ENCODE measurements at regions of chr10 and their contacts with region 1.

Region 1: DNA sequence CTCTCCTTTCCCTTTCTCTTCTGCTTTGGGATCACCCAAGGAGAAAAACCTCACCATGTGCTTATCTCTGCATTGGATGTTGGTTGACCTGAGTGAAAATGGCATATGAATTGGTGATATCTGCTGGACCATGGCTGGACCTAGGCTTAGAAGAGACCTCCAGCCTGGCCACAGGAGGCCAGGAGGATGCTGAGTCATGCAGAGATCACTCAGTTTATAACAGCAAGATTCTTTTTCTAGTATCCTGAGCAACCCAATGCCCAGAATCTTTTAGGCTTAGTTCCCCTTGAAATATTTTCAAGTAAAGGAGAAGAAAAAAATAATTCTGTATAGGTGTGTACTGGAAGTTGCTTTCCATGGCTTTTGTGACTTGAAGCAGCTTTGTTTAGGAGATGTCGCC is 236.3 kb downstream of the KLF6 start:
- DNase-seq: no peak
- H3K4me3 ChIP-seq: no peak overlapping the region
- H3K27ac ChIP-seq: peak overlapping the region; percentile 0 to 35
- H3K4me1 ChIP-seq: peaks cover 0 to 17% (median 5%) of the 10 kb centered on the region in 4 donors
- H3K27me3 ChIP-seq: no peaks in the 10 kb centered on the region
- CTCF ChIP-seq: no peak

Region 2: GRCh38 chr10:3467052-3467951 is 81.4 kb before region 1 on chr10:
- intact Hi-C with region 1: loop called (anchors 5 kb)
- DNase-seq: peak; percentile 85 to 89
- H3K4me3 ChIP-seq: peak overlapping the region; percentile 26 to 31
- H3K27ac ChIP-seq: peak overlapping the region; percentile 81 to 82
- H3K4me1 ChIP-seq: peaks cover 4 to 69% (median 37%) of the 10 kb centered on the region in 4 donors
- H3K27me3 ChIP-seq: no peaks in the 10 kb centered on the region
- CTCF ChIP-seq: peak; percentile 28 to 42

Region 3: DNA sequence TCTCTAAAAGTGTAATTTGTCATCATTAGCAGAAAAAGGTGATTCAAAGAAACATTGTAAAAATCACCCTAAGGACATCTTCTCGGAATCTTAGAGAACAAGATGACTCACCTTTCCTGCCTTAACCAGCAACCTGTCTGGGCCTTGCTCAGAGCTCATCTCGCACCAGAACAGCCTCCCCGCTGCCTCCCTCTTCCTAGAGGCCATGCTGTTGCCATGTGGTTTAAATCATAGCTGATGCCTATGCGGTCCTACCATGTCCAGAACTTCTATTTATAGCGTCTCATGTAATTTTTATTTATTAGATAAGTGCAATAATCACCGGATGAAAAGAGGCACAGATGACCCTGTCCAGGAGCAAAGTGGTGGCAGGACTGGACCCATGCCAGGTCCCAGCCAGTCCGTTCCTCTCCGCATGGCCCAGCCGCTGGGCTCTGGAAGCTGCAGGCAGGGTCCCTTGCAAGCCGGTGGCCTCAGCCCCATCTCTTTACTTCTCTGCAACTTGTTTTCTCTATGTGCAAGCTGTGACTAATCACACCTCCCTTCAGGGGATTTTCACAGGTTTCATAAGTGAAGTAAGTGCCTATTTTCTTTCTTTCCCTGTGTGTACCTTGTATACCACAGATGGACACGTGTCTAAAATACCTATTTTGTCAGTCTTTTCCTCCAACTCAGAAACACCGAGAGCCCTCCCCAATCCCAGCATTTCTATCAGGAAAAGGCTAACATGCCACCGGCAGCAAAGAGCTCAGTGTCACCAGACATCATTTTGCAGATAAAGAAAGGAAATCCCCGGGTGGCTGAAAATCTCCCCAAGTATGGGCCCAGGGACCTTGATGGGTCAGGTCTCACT is 209.2 kb after region 1 on chr10:
- intact Hi-C with region 1: no loop called
- DNase-seq: no peak
- H3K4me3 ChIP-seq: no peak overlapping the region
- H3K27ac ChIP-seq: no peak overlapping the region
- H3K4me1 ChIP-seq: peaks cover 0 to 23% (median 14%) of the 10 kb centered on the region in 4 donors
- H3K27me3 ChIP-seq: no peaks in the 10 kb centered on the region
- CTCF ChIP-seq: no peak

Measured in tibial artery (tissue), 4 donors.